MCF 10A (cell line): ENCODE measurements at regions of chr3 and their contacts with region 1.

Region 1: GRCh38 chr3:30518181-30518864 is 88.1 kb upstream of the TGFBR2 start:
- DNase-seq: peak; percentile 96
- H3K4me3 Mint-ChIP-seq: peak overlapping the region; percentile 4
- H3K27ac Mint-ChIP-seq: peak overlapping the region; percentile 89
- H3K4me1 Mint-ChIP-seq: peaks cover 46% of the 10 kb centered on the region
- H3K27me3 Mint-ChIP-seq: no peaks in the 10 kb centered on the region
- CTCF ChIP-seq: no peak

Region 2: DNA sequence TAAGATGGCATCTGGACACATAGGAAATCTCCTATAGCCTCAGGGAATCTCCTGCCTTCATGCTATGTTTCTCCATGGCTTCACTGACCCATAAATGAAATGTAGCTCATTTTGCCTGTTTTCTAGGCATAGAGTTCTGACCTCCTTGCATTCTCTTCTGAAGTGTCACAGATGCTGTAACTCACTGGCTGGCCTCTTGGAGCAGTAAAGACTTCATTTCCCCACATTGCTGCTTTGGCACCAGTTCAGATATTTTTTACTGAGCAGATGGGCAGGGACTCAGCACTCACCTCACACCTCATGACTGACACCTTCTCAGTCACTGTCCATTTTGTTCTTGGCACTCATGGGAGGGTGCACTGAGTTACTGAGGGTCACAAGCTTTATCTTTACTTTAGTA is 198.6 kb before region 1 on chr3:
- CTCF ChIA-PET with region 1: interaction called, 5 read pairs
- POLR2A ChIA-PET with region 1: interaction called, 13 read pairs
- intact Hi-C with region 1: no loop called
- DNase-seq: peak; percentile 77
- H3K4me3 Mint-ChIP-seq: no peak overlapping the region
- H3K27ac Mint-ChIP-seq: peak overlapping the region; percentile 46
- H3K4me1 Mint-ChIP-seq: peaks cover 23% of the 10 kb centered on the region
- H3K27me3 Mint-ChIP-seq: no peaks in the 10 kb centered on the region
- CTCF ChIP-seq: peak; percentile 24

Region 3: DNA sequence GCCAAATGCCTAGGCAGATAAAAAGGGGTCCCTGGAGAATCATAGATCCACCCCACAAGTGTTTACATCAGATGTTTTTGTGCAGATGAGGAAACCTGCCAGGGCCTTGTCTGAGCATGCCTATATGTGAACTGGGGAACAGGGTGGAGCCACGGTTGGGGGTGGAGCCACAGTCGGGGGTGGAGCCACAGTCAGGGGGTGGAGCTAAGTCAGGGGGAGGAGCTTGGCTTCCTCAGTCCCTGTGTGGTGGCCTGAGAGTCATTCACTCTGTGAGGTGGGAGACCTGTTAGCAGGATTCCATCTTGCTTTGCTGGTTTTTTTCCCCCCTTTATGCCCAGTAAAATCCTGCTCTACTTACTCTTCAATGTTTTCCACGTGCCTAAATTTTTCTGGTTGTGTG is 30.3 kb after region 1 on chr3:
- CTCF ChIA-PET with region 1: interaction called, 3 read pairs
- POLR2A ChIA-PET with region 1: interaction called, 34 read pairs
- intact Hi-C with region 1: no loop called
- DNase-seq: peak; percentile 51
- H3K4me3 Mint-ChIP-seq: no peak overlapping the region
- H3K27ac Mint-ChIP-seq: peak overlapping the region; percentile 35
- H3K4me1 Mint-ChIP-seq: peaks cover 22% of the 10 kb centered on the region
- H3K27me3 Mint-ChIP-seq: no peaks in the 10 kb centered on the region
- CTCF ChIP-seq: no peak

Region 4: DNA sequence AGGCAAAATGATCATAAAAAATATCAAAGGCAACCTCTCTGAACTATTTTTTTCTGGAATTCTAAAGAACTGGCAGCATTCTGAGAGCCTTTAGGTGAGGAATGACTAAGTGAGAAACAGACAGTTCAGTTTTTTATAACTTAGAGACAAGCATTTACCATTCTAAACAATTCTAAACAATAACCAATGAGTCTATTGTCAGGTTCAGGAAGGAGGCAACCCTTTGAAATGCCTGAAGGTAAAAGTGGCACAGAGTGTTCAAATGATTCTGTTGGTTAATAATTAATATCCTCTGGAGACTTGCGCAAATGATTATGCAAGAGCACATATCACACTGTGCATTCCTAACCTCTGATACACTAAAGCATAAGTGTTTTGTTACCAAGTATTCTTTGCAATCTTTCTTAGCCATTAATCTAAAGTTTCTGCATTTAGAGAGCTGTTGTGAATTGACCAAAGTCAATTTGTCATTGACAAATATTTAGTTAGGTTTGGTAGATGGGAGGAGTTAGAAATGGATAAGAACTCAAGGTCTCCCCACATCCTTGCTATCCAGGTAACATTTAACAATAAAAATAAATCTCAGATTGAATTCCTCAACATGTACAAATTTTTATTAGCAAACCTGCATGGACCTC is 78.9 kb after region 1 on chr3:
- CTCF ChIA-PET with region 1: interaction called, 4 read pairs
- POLR2A ChIA-PET with region 1: interaction called, 21 read pairs
- intact Hi-C with region 1: no loop called
- DNase-seq: peak; percentile 95
- H3K4me3 Mint-ChIP-seq: no peak overlapping the region
- H3K27ac Mint-ChIP-seq: peak overlapping the region; percentile 96
- H3K4me1 Mint-ChIP-seq: peaks cover 26% of the 10 kb centered on the region
- H3K27me3 Mint-ChIP-seq: no peaks in the 10 kb centered on the region
- CTCF ChIP-seq: no peak

Region 5: DNA sequence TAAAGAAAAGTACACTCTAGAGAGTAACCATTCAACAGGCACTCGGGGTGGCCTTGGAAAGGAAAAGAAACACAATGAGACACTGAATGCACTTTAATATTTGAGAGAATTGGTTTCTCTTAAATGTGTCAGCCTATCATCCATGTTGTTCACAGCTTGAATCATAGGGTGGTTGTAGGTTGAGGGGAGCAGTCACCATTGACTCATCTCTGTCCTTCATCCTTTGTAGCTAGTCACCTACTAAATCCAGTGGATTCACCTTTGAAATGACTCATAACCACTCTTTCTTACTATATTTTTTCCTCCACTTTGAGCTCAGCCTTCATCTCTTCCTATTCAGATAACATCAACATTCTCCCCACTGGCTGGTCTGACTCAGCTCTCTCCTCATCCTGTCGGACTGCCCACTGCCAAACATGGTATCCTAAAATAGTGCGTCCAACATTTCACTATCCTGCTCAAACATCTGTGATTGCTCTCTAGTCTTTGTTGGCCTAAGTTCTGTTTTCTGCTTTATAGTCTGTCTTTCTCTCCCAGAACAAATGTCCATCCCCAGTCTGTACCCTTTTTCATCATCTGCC is 558.8 kb after region 1 on chr3:
- CTCF ChIA-PET with region 1: no interaction called
- POLR2A ChIA-PET with region 1: no interaction called
- intact Hi-C with region 1: no loop called
- DNase-seq: peak; percentile 85
- H3K4me3 Mint-ChIP-seq: no peak overlapping the region
- H3K27ac Mint-ChIP-seq: peak overlapping the region; percentile 4
- H3K4me1 Mint-ChIP-seq: peaks cover 18% of the 10 kb centered on the region
- H3K27me3 Mint-ChIP-seq: no peaks in the 10 kb centered on the region
- CTCF ChIP-seq: no peak